ENCODE measurements at regions of chr3 and their contacts with region 1.

Region 1: DNA sequence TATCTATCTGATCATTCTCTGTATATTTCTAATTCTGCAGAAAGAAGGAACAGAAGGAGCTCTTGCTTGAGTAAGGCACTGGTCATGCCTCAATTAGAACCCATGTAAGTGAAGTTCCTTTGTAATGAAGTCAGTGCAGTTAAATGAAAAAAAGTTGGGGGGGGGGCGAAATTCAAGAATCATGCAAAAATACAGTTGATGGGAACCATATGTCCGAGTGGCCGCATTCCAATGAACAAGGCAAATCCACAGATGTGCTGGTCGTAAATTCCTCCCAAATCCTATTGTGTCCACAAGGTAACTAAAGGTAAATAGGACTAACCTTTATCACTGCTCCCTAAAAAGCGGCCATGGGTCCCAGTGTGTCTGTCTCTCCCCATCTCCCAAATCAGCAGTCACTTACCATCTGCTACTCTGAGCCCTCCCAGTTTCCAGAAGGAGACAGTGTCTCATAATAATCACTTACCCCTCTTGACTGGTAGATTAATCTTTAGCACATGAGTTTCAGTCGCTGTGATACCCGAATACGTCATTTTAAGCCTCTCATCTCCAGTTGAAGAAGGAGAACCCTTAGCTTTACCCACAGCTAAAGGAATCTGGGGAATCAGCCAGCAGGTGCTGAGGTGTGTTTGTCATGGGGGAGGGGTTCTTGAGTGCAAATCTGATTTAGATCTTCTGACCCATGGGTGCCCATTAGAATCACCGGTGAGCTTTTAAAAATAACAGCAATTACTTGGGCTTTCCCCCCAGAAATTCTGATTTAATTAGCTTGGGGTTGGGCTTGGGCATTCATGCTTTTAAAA is 56.3 kb upstream of the EPHB3 start:
- DNase-seq: no peak
- H3K4me3 ChIP-seq: no peak overlapping the region
- H3K4me3 Mint-ChIP-seq: no peak overlapping the region
- H3K27ac ChIP-seq: no peak overlapping the region
- H3K27ac Mint-ChIP-seq: no peak overlapping the region
- H3K4me1 ChIP-seq: peaks cover 0 to 2% of the 10 kb centered on the region in 2 donors
- H3K4me1 Mint-ChIP-seq: peaks cover 5% of the 10 kb centered on the region
- H3K27me3 ChIP-seq: peaks cover 0 to 5% of the 10 kb centered on the region in 2 donors
- H3K27me3 Mint-ChIP-seq: peaks cover 12 to 16% (median 15%) of the 10 kb centered on the region in 3 donors
- CTCF ChIP-seq: no peak

Region 2: DNA sequence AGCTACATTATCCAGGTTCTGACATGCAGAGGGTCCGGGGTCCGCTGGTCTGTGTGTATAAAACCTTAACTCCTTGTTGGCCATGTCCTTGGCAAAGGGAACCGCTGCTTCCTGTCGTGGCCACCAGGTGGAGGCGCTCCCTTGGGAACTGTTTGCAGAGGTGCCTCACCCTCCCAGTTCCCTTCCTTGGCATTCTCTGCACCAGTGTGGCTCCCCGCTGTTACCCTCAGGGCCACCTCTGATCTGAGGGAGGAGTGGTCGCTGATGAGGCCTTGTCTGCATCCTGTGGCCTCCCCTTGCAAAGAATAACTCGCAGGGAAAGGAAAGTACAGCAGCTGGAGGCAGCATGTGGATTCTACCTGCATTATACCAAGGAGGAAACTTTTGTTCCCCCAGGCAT is 35.9 kb before region 1 on chr3:
- intact Hi-C with region 1: loop called (anchors 5 kb)
- DNase-seq: peak in 2 of 3 donors; percentile 41 to 42
- H3K4me3 ChIP-seq: no peak overlapping the region
- H3K4me3 Mint-ChIP-seq: no peak overlapping the region
- H3K27ac ChIP-seq: no peak overlapping the region
- H3K27ac Mint-ChIP-seq: no peak overlapping the region
- H3K4me1 ChIP-seq: peaks cover 36 to 37% of the 10 kb centered on the region in 2 donors
- H3K4me1 Mint-ChIP-seq: peaks cover 45% of the 10 kb centered on the region
- H3K27me3 ChIP-seq: no peaks in the 10 kb centered on the region
- H3K27me3 Mint-ChIP-seq: peaks cover 0 to 12% (median 5%) of the 10 kb centered on the region in 3 donors
- CTCF ChIP-seq: peak; percentile 66

Measured in CD14-positive monocyte (primary cell).